A549 (cell line): ENCODE measurements at regions of chr15 and their contacts with region 1.

Region 1: DNA sequence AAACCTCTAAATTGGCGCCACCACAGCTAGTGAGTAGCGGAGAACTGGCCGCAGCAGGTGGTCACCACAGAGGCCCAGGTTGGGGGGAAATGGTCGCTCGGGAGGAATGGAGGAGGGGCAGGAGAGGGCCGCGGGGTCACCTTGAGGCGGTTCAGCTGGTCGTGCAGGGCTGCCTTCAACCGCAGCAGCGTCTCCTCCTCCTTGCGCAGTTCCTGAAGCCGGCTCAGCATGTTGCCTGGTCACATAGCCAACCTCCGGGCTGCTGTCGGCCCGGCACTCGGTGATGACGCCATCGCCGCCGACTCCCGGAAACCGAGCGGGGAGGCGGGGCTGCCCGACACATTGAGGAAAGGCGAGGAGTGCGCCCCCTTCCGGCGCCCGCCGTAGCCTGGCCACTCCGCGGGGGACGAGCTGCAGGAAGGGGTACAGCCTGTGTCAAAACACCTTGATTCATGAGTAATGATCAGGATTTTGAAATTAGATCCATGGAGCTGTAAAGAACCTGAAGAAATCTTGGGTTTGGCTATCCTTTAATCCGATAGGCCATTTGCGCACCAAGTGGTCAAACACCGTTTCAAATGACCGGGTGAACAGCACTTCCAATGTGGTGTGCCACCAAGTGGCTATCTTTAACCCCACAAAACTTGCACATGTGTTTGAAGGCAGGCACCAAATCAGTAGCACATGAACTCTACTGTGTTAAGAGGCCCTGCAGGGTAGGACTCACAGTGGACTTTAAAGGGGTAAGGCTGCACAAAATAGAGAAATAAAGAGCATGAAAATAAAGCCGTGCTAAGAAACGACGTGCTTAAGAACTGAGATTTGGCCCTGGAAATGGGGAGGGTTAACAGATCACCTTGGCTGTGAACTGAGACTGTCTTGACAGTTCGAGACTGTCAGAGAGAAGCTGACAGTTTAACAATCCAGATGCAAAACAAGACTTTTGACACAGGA is at the start of gene SNAPC5:
- DNase-seq: peak; percentile 85 to 96
- ATAC-seq: peak; percentile 84 to 89
- H3K4me3 ChIP-seq: peak within 1 kb of the TSS; percentile 84
- H3K27ac ChIP-seq: peak within 1 kb of the TSS; percentile 91 to 92
- H3K4me1 ChIP-seq: peaks cover 54% of the 10 kb centered on the region
- CTCF ChIP-seq: peak; percentile 100
- EP300 ChIP-seq: no peak
- POLR2A ChIP-seq: peak; percentile 87
- RAD21 ChIP-seq: peak; percentile 36 to 67
- polyA plus RNA-seq, gene SNAPC5: 70.5 and 84.9 TPM in 2 replicates

Region 2: GRCh38 chr15:66386204-66387123 is 111.3 kb before region 1 on chr15 and contains the start of gene MAP2K1:
- CTCF ChIA-PET with region 1: interaction called, 75 read pairs
- POLR2A ChIA-PET with region 1: interaction called, 25 read pairs
- DNase-seq: peak; percentile 97
- ATAC-seq: peak; percentile 93 to 94
- H3K4me3 ChIP-seq: peak within 1 kb of the TSS; percentile 83
- H3K27ac ChIP-seq: peak within 1 kb of the TSS; percentile 88 to 92
- H3K4me1 ChIP-seq: peaks cover 27% of the 10 kb centered on the region
- CTCF ChIP-seq: peak; percentile 83
- EP300 ChIP-seq: no peak
- POLR2A ChIP-seq: peak; percentile 70
- RAD21 ChIP-seq: peak; percentile 47 to 56; a peak in 2 of 5 replicates
- polyA plus RNA-seq, gene MAP2K1: 30.3 and 34.3 TPM in 2 replicates

Region 3: DNA sequence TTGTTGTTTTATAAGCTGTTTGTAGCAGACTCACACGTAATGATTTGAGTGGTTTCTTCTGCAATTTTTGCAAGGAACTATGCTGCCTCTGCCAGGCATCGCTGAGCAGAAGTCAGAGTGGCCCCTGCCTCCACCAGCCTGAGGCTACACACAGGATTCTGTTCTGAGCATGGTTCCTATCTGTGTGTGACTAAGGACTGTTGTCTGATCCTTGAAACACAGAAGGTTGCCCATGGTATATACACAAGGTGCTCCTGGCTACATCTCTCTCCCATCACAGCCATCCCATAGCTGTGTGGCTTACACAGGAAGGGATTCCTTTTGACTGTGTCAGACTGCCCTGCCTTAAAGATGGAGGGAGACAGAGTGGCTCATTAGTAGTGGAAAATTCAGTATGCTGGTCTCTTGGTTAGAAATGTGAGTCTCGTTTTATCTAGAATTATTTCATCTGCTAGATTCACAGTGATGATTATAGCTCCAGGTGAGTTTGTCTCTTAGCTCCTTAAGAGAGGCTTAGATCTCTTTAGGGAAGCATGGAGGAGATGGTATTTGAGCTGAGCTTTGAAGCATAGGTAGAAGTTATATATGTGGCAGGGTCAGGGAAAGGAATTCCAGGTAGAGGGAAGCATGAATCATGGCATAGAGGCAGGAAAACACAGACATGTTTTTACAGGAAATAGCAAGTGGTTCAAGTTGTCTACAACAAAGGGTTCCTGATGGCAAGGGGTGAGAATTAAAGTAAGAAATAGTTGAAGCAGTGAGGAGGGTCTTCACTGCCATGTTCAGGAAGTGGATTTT is 37.8 kb before region 1 on chr15:
- CTCF ChIA-PET with region 1: interaction called, 20 read pairs
- POLR2A ChIA-PET with region 1: no interaction called
- DNase-seq: no peak
- ATAC-seq: peak; percentile 51 to 65; a peak in 3 of 6 replicates
- H3K4me3 ChIP-seq: no peak overlapping the region
- H3K27ac ChIP-seq: no peak overlapping the region
- H3K4me1 ChIP-seq: peaks cover 34% of the 10 kb centered on the region
- CTCF ChIP-seq: no peak
- EP300 ChIP-seq: no peak
- POLR2A ChIP-seq: no peak
- RAD21 ChIP-seq: no peak

Region 4: GRCh38 chr15:66477755-66478154 is 20.0 kb before region 1 on chr15:
- CTCF ChIA-PET with region 1: interaction called, 29 read pairs
- POLR2A ChIA-PET with region 1: no interaction called
- DNase-seq: no peak
- ATAC-seq: no peak
- H3K4me3 ChIP-seq: no peak overlapping the region
- H3K27ac ChIP-seq: no peak overlapping the region
- H3K4me1 ChIP-seq: peaks cover 7% of the 10 kb centered on the region
- CTCF ChIP-seq: no peak
- EP300 ChIP-seq: no peak
- POLR2A ChIP-seq: no peak
- RAD21 ChIP-seq: no peak

Region 5: DNA sequence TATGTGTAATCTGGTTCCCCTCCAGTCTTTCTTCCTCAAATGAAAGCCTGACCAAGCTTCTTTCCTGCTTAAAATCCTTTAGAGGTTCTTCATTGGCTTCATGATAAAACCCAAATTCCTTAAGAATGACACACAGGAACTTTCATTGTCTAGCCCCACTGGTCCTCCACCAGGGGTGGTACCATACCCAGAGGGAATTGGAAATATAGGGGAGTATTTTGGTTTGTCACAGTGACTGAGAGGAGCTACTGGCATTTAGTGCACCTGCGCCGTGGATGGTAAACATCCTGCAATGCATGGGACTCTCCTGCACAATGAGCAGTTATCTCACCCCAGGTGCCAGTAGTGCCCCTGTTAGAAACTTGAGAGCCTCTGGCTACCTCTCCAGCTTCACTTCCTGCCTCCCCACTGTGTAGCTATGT is 18.1 kb after region 1 on chr15:
- CTCF ChIA-PET with region 1: interaction called, 24 read pairs
- POLR2A ChIA-PET with region 1: no interaction called
- DNase-seq: no peak
- ATAC-seq: no peak; a peak in 2 of 6 replicates
- H3K4me3 ChIP-seq: no peak overlapping the region
- H3K27ac ChIP-seq: no peak overlapping the region
- H3K4me1 ChIP-seq: no peaks in the 10 kb centered on the region
- CTCF ChIP-seq: no peak
- EP300 ChIP-seq: no peak
- POLR2A ChIP-seq: no peak
- RAD21 ChIP-seq: no peak